PC-3 (cell line): ENCODE measurements at regions of chr2 and their contacts with region 1.

Region 1: GRCh38 chr2:11681722-11682589 is 12.0 kb upstream of the NTSR2 start:
- DNase-seq: peak; percentile 78
- ATAC-seq: peak; percentile 80
- H3K4me3 ChIP-seq: no peak overlapping the region
- H3K27ac ChIP-seq: no peak overlapping the region
- H3K4me1 ChIP-seq: no peaks in the 10 kb centered on the region
- H3K27me3 ChIP-seq: no peaks in the 10 kb centered on the region
- CTCF ChIP-seq: peak; percentile 95

Region 2: GRCh38 chr2:11583840-11584524 is 98.0 kb before region 1 on chr2:
- CTCF ChIA-PET with region 1: interaction called, 3 read pairs
- POLR2A ChIA-PET with region 1: no interaction called
- intact Hi-C with region 1: loop called (anchors 2 kb)
- DNase-seq: peak; percentile 89
- ATAC-seq: peak; percentile 85
- H3K4me3 ChIP-seq: no peak overlapping the region
- H3K27ac ChIP-seq: no peak overlapping the region
- H3K4me1 ChIP-seq: no peaks in the 10 kb centered on the region; the same call in 1 of the 2 replicates
- H3K27me3 ChIP-seq: no peaks in the 10 kb centered on the region
- CTCF ChIP-seq: peak; percentile 96

Region 3: GRCh38 chr2:11598228-11598731 is 83.7 kb before region 1 on chr2:
- CTCF ChIA-PET with region 1: no interaction called
- POLR2A ChIA-PET with region 1: no interaction called
- intact Hi-C with region 1: no loop called
- DNase-seq: peak; percentile 64
- ATAC-seq: peak; percentile 88
- H3K4me3 ChIP-seq: no peak overlapping the region
- H3K27ac ChIP-seq: no peak overlapping the region
- H3K4me1 ChIP-seq: peaks cover 12% of the 10 kb centered on the region
- H3K27me3 ChIP-seq: no peaks in the 10 kb centered on the region
- CTCF ChIP-seq: no peak